ENCODE measurements at regions of chr5 and their contacts with region 1.

Region 1: DNA sequence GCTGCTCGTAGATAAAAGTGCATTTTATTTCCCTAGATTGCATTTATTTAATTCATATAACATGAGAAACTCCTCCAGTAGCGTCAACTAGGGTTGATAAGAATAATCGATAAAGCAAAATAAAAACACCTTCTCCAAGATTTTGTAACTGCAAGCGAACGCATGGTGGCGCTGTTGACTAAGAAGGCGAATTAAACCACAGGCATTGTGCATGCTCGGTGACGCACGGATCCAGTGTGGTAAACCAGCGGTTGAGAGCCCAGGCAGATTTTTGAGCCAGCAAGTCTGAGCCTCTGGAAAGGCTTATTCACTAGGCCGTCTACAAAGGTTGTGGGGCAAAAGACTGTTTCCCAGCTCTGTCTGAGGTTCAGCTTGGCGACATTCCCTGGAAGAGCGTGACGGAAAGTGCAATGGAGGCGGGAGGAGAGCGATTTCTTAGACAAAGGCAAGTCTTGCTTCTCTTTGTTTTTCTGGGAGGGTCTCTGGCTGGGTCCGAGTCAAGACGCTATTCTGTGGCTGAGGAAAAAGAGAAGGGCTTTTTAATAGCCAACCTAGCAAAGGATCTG is at the start of gene PCDHB3:
- DNase-seq: peak; percentile 51 to 87
- H3K4me3 ChIP-seq: peak within 1 kb of the TSS in 3 of 4 experiments; percentile 8 to 39 (median 32); a peak in 4 of 8 replicates
- H3K27ac ChIP-seq: no peak within 1 kb of the TSS
- H3K4me1 ChIP-seq: no peaks in the 10 kb centered on the region; a peak in 4 of 7 replicates
- H3K27me3 ChIP-seq: no peaks in the 10 kb centered on the region
- CTCF ChIP-seq: peak; percentile 65 to 82 (median 66)
- EP300 ChIP-seq: no peak
- POLR2A ChIP-seq: peak in 1 of 2 experiments; percentile 70; a peak in 2 of 3 replicates
- RAD21 ChIP-seq: peak; percentile 69 to 72
- total RNA-seq, gene PCDHB3: 3.4 and 4.0 TPM in 2 replicates

Region 2: DNA sequence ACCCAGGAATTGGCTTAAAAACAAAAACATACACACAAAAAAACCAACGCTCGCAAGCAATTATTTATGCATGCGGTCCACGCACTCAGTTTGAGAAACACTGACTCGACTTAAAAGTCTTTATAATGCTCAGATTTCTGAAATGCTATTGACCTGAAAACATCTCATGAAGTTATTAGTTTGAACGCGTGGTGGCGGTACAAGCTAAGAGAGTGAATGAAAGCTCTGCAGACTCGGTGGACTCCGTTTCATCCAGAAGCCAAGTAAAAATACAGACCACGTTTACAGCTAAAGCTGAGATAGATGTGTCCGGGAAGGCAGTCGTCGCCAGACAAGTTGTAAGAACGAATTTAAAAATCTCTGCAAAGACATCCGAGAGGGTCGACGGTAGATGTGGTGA is 49.5 kb after region 1 on chr5 and contains the start of gene PCDHB6:
- CTCF ChIA-PET with region 1: interaction called, 10 read pairs
- POLR2A ChIA-PET with region 1: no interaction called
- DNase-seq: peak in 1 of 2 experiments; percentile 60
- H3K4me3 ChIP-seq: no peak within 1 kb of the TSS
- H3K27ac ChIP-seq: no peak within 1 kb of the TSS
- H3K4me1 ChIP-seq: no peaks in the 10 kb centered on the region
- H3K27me3 ChIP-seq: no peaks in the 10 kb centered on the region
- CTCF ChIP-seq: peak in 2 of 3 experiments; percentile 39 to 44; a peak in 2 of 4 replicates
- EP300 ChIP-seq: no peak
- POLR2A ChIP-seq: no peak
- RAD21 ChIP-seq: peak; percentile 37 to 46; a peak in 3 of 4 replicates
- total RNA-seq, gene PCDHB6: 0.17 and 0.28 TPM in 2 replicates

Region 3: DNA sequence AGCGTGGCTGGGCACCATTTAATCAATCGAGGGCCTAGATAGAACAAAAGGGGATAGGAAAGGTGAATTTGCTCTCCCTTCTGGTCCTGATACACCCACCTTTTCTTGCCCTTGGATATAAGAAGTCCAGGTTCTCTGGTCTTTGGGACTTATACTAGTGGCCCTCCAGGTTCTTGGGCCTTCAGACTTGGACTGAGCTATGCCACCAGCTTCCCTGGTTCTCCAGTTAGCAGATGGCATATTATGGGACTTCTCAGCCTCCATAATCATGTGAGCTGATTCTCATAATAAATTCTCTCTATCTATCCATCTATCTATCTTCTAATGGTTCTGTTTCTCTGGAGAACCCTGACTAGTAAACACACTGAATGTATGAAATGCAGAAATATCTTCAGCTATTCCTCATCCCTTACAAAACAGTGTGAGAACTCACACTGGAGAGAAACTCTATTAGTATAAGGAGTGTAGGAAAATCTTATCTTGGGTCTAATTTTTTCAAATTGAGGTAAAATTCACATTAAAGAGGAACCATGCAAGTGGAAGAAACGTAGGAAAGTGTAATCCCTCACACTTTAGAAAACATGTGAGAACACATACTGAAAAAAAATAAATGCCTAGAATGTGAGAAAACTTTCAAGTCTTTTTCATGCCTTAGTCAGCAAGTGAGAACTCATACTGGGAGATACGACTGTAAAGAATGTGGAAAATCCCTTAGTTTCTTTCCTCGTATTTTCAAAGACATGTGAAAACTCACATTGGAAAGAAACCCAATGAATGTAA is 160.3 kb after region 1 on chr5:
- CTCF ChIA-PET with region 1: no interaction called
- POLR2A ChIA-PET with region 1: no interaction called
- DNase-seq: no peak
- H3K4me3 ChIP-seq: no peak overlapping the region
- H3K27ac ChIP-seq: no peak overlapping the region
- H3K4me1 ChIP-seq: no peaks in the 10 kb centered on the region
- H3K27me3 ChIP-seq: no peaks in the 10 kb centered on the region
- CTCF ChIP-seq: no peak
- EP300 ChIP-seq: no peak
- POLR2A ChIP-seq: no peak
- RAD21 ChIP-seq: no peak